Left cardiac atrium (tissue), 4 donors: ENCODE measurements at regions of chr3 and their contacts with region 1.

Region 1: DNA sequence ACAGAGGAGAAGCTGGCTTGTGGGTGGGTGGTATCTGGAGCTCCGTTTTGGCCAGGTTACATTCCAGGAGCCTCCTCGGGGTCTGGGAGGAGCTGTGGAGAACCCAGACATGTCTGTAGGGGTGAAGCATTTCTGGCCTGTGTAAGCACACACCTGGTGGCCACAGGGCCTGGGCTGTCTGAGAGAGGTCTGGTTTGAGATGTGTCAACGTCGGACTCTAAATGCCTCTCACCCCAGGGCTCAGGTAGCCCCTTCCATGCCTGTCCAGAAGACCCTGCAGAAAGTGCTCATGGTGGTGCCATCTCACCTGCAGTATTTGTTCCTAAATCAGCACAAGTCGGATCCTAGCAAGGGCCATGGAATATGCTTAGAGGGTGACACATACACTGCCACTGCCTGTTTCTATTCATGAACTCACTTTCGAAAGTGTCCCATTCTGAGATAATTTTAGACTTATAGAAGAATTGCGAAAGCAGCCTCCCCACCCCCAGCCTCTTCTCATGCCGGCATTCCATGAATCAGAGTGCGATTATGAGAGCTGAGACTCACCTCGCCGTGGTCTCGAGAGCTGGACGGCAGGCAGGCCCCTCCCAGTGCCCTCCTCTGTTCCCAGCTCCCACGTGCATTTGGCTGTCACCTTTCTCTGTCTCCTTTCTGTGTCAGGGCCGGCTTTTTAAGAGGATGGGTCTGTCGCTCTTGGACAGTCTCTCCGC is 63.7 kb downstream of the KLF15 start:
- DNase-seq: peak; percentile 73
- ATAC-seq: peak; percentile 62 to 92

Region 2: GRCh38 chr3:126342991-126343648 is 49.6 kb after region 1 on chr3:
- intact Hi-C with region 1: loop called in 1 of 2 experiments (anchors 10 kb)
- DNase-seq: no peak
- ATAC-seq: peak in 1 of 2 donors; percentile 48

Region 3: DNA sequence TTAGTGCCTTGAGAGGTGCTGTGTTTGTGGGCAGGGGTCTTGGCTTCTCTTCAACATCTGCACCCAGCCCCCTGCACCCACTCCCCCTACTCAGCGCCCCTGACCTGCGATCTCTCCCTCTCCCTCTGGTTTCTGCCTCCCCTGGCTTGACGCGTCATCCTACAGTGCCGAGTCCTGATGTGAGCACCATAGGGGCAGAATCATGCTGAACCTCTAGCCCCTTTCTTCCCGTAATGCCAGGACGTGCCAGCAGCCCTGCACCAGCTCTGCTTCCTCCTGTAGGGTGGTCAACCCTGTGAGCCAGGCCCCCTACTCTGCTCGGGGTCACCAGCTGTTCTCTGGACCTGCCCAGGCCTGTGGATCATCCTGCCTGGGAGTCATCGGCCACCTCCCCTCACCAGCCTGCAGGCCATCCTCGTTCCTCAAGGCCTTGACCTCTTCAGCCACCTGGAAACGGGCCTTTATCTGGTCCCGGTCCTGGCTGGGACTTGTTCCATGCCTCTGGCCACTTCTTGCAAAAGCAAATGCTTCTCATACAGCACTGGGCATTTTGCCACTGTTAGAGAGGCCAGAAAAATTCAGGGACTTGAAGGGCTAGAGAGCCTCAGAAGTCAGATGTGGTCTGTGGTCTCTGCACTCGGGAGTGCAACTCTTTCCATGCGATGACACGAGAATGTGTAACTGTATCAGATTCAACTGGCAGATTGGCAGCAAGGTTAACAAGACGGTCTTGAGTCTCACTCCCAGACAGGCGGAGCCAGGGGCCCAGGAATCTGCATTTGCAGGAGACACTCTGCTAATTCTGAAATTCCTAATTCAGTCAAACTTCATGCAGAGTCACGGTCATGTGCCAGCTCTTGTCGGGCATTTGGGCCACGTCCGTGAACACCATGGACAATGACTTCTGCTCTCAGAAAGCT is 80.4 kb after region 1 on chr3:
- intact Hi-C with region 1: no loop called
- DNase-seq: no peak
- ATAC-seq: peak; percentile 41 to 69

Region 4: GRCh38 chr3:126442094-126442855 is 148.7 kb after region 1 on chr3:
- intact Hi-C with region 1: no loop called
- DNase-seq: peak; percentile 49
- ATAC-seq: peak; percentile 46 to 55